Prostate gland (tissue), 2 donors: ENCODE measurements at regions of chr19 and their contacts with region 1.

Region 1: DNA sequence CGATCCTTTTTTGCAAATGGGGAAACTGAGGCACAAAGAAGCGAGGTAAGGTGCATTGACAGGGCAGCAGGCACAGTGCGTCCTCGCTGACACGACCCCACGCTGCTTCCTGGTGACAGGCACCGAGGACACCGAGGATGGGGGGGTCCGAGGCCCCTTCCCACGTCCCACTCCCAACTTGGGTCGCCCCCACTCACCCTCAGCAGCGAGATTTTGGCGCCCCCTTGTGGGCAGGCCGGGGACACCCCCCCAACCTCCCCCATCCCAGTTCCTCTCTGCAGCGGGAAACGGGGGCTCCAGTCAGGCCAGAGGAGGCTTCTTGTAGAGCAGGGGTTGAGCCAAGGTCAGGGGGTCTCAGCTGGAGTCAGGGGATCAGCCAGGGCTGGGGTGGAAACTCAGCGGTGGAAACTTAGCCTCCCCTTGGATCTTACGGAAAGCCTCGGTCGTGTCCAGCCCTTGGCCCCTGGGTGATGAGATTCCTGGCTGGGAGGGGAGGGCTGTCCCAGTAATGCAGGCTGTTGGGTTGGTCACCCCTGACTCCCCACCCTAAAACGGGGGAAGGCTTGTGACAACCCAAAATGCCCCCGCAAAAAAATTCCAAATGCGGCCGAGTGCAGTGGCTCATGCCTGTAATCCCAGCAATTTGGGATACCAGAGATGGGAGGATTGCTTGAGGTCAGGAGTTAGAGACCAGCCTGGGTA is 8.2 kb downstream of the SMIM24 start:
- DNase-seq: peak; percentile 19
- H3K4me3 ChIP-seq: no peak overlapping the region
- H3K27ac ChIP-seq: no peak overlapping the region
- H3K4me1 ChIP-seq: no peaks in the 10 kb centered on the region
- H3K27me3 ChIP-seq: no peaks in the 10 kb centered on the region
- CTCF ChIP-seq: peak; percentile 75 to 90 (median 83)
- POLR2A ChIP-seq: no peak

Region 2: GRCh38 chr19:3324321-3324856 is 147.7 kb before region 1 on chr19:
- intact Hi-C with region 1: loop called (anchors 2 kb)
- DNase-seq: peak; percentile 40
- H3K4me3 ChIP-seq: no peak overlapping the region
- H3K27ac ChIP-seq: no peak overlapping the region
- H3K4me1 ChIP-seq: no peaks in the 10 kb centered on the region
- H3K27me3 ChIP-seq: peaks cover 3% of the 10 kb centered on the region
- CTCF ChIP-seq: peak; percentile 29 to 62 (median 56)
- POLR2A ChIP-seq: no peak

Region 3: DNA sequence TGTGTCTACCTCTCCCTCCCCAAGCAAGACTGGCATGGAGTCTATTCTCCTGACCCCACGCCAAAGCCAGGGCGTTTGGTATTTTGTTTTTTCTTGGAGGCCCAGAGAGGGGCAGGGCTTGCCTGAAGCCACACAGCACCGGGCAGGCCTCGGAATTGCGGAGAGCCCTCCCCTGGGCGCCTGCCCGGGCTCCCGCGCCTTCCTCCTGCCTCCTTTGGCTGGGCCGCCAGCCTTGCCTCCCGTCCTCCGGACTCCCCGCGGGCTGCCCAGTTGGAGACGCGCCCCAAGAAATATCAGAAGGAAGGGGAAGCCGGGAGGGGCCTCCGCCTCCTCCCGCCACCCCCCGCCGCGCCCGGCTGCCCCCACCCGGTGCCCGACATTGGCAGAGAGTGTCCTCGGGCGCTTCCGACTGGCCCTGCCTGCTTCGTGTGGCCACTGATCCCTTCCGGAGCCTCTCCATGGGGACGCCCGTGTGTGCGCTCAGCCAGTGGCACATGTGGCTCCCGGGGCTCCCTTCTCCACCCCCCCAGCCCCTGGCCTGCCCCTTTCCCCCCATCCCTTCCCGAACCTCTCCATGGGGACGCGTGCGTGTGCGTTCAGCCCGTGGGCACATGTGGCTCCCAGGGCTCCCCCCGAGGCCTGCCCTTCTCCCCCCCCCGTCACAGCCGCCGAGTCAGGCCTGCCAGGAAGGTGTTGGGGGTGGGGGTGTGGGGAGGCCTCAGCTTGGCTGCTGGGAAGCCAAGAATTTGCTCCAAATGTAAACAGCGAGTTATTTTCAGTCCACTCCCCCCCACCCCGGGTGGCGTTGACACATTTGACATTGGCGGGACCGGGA is 68.4 kb before region 1 on chr19:
- intact Hi-C with region 1: no loop called
- DNase-seq: peak; percentile 88
- H3K4me3 ChIP-seq: peak overlapping the region; percentile 31 to 33
- H3K27ac ChIP-seq: peak overlapping the region; percentile 99 to 100
- H3K4me1 ChIP-seq: peaks cover 19% of the 10 kb centered on the region
- H3K27me3 ChIP-seq: no peaks in the 10 kb centered on the region
- CTCF ChIP-seq: no peak
- POLR2A ChIP-seq: no peak

Region 4: DNA sequence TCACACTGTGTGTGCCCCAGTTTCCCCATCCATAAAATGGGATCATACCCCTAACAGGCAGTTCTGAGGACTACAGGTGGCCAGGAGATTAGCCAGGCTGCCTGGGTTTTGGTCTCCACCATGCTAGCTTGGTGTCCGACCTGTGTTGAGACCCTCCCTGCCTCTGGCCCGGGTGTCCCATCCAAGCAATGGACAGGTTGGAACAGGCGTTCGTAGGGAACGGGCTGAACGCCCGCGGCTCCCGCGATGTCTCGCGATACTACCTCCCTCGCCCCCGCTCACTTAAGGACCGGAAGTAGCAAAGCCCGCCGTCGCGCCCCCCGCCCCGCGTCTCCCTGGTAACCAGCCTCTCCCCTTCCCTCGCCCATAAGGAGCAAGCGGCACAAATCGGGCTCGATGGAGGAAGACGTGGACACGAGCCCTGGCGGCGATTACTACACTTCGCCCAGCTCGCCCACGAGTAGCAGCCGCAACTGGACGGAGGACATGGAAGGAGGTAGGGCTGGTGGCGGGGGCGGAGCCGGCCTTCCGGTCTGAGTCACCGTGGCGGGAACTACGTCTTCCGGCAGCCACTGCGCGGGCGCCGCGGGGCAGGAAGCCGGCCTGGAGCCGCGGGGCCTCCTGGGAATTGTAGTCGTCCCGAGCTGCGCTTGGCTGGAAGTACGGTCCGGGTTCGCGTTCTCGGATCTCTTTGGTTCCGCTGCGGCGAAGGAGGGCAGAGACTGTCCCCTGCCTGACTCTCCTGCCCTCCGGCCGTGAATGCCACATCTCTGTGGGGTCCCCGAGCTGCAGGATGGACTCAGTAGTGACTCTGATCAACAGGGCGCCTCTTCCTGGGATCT is 37.2 kb before region 1 on chr19:
- intact Hi-C with region 1: loop called (anchors 5 kb)
- DNase-seq: peak; percentile 94
- H3K4me3 ChIP-seq: peak overlapping the region; percentile 18 to 41
- H3K27ac ChIP-seq: peak overlapping the region; percentile 85 to 90
- H3K4me1 ChIP-seq: peaks cover 14% of the 10 kb centered on the region
- H3K27me3 ChIP-seq: no peaks in the 10 kb centered on the region
- CTCF ChIP-seq: peak in 1 of 4 experiments; percentile 19
- POLR2A ChIP-seq: peak; percentile 38